PC-3 (cell line): ENCODE measurements at regions of chr11 and their contacts with region 1.

Region 1: GRCh38 chr11:96389720-96390487 is at the starts of genes CCDC82 and JRKL:
- DNase-seq: peak; percentile 99
- ATAC-seq: peak; percentile 91
- H3K4me3 ChIP-seq: peak within 1 kb of the TSS; percentile 89
- H3K27ac ChIP-seq: peak within 1 kb of the TSS; percentile 56
- H3K4me1 ChIP-seq: peaks cover 45% of the 10 kb centered on the region
- H3K27me3 ChIP-seq: no peaks in the 10 kb centered on the region
- CTCF ChIP-seq: no peak
- total RNA-seq, gene CCDC82: 13.5 and 14.5 TPM in 2 replicates
- total RNA-seq, gene JRKL: 4.7 and 5.1 TPM in 2 replicates

Region 2: GRCh38 chr11:95835768-95836488 is 554.0 kb before region 1 on chr11:
- CTCF ChIA-PET with region 1: interaction called, 8 read pairs
- POLR2A ChIA-PET with region 1: interaction called, 3 read pairs
- intact Hi-C with region 1: loop called (anchors 1 kb)
- DNase-seq: peak; percentile 94
- ATAC-seq: peak; percentile 61
- H3K4me3 ChIP-seq: no peak overlapping the region
- H3K27ac ChIP-seq: no peak overlapping the region
- H3K4me1 ChIP-seq: peaks cover 38% of the 10 kb centered on the region
- H3K27me3 ChIP-seq: no peaks in the 10 kb centered on the region
- CTCF ChIP-seq: peak; percentile 99

Region 3: GRCh38 chr11:95923728-95924413 is 466.0 kb before region 1 on chr11 and contains the start of gene MTMR2:
- CTCF ChIA-PET with region 1: no interaction called
- POLR2A ChIA-PET with region 1: interaction called, 3 read pairs
- intact Hi-C with region 1: loop called (anchors 2 kb)
- DNase-seq: peak; percentile 69
- ATAC-seq: peak; percentile 82
- H3K4me3 ChIP-seq: peak within 1 kb of the TSS; percentile 85
- H3K27ac ChIP-seq: peak within 1 kb of the TSS; percentile 81
- H3K4me1 ChIP-seq: peaks cover 26% of the 10 kb centered on the region
- H3K27me3 ChIP-seq: no peaks in the 10 kb centered on the region
- CTCF ChIP-seq: no peak
- total RNA-seq, gene MTMR2: 31.7 and 32.2 TPM in 2 replicates

Region 4: GRCh38 chr11:96037405-96037936 is 352.4 kb before region 1 on chr11:
- CTCF ChIA-PET with region 1: interaction called, 4 read pairs
- POLR2A ChIA-PET with region 1: interaction called, 6 read pairs
- intact Hi-C with region 1: loop called (anchors 2 kb)
- DNase-seq: peak; percentile 95
- ATAC-seq: peak; percentile 69
- H3K4me3 ChIP-seq: peak overlapping the region; percentile 53
- H3K27ac ChIP-seq: peak overlapping the region; percentile 91
- H3K4me1 ChIP-seq: peaks cover 49% of the 10 kb centered on the region
- H3K27me3 ChIP-seq: no peaks in the 10 kb centered on the region
- CTCF ChIP-seq: peak; percentile 53

Region 5: GRCh38 chr11:96104496-96104895 is 285.4 kb before region 1 on chr11:
- CTCF ChIA-PET with region 1: no interaction called
- POLR2A ChIA-PET with region 1: interaction called, 31 read pairs
- intact Hi-C with region 1: no loop called
- DNase-seq: no peak
- ATAC-seq: no peak
- H3K4me3 ChIP-seq: no peak overlapping the region
- H3K27ac ChIP-seq: no peak overlapping the region
- H3K4me1 ChIP-seq: peaks cover 21% of the 10 kb centered on the region
- H3K27me3 ChIP-seq: no peaks in the 10 kb centered on the region
- CTCF ChIP-seq: no peak

Region 6: DNA sequence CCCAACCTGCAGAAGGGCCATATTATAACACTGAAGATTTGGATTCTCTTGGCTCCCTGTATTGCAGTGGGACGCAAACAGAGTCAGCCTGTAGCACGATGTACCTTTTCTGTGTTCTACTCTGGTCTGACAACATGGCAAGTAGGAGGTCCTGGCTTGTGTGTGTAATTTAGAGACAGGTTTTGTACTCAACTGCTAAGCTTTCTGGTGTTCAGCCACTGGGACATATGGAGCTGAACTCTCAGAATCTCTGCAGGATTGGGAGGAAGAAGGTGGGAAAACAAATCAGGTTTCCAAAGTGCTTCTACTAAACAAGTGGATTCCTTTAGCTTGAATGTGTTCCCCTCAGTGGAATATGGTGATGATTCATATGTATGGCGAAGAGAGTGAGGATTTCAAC is 273.5 kb before region 1 on chr11:
- CTCF ChIA-PET with region 1: no interaction called
- POLR2A ChIA-PET with region 1: no interaction called
- intact Hi-C with region 1: no loop called
- DNase-seq: no peak
- ATAC-seq: no peak
- H3K4me3 ChIP-seq: no peak overlapping the region
- H3K27ac ChIP-seq: no peak overlapping the region
- H3K4me1 ChIP-seq: no peaks in the 10 kb centered on the region
- H3K27me3 ChIP-seq: no peaks in the 10 kb centered on the region
- CTCF ChIP-seq: no peak

Region 7: DNA sequence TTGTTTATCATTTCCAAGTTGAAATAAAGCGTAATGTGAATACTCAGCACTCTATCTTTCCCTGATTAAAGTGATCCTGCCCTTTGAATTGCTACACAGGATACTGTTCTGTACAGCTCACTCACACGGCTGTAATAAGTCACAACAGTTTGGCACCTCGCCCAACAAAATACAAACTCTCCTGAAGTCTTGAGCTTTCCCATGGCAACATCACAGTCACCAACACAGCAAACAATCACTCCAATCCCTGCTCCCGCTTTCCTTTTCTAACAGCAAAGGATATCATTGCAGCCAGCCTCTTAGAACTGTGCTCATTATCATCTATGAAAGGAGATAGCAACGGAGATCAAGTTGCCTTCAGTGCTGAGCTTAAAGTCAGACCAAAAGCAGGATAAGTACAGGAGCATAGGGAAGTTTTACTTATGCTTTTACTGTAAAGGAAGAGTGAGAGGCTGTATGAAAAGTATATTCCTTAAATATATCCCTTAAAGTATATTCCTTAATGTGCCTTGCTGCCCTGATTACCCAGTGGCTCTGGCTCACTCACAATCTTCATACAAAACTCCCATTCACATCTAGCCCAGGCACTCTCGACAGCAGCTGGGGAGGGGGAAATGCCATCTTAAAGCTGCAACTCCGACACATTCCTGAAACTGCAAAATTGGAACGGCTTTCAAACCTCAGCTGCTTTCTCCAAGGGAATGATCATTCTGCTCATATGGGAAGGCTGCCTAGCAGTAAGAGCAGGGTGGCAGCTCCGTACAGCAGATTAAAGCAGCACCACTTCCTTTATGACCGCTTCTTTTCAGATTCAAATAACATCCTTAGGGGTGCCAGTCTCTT is 82.8 kb before region 1 on chr11:
- CTCF ChIA-PET with region 1: no interaction called
- POLR2A ChIA-PET with region 1: interaction called, 7 read pairs
- intact Hi-C with region 1: loop called (anchors 1 kb)
- DNase-seq: peak; percentile 100
- ATAC-seq: peak; percentile 68
- H3K4me3 ChIP-seq: peak overlapping the region; percentile 60
- H3K27ac ChIP-seq: peak overlapping the region; percentile 96
- H3K4me1 ChIP-seq: peaks cover 90% of the 10 kb centered on the region
- H3K27me3 ChIP-seq: no peaks in the 10 kb centered on the region
- CTCF ChIP-seq: no peak

Region 8: DNA sequence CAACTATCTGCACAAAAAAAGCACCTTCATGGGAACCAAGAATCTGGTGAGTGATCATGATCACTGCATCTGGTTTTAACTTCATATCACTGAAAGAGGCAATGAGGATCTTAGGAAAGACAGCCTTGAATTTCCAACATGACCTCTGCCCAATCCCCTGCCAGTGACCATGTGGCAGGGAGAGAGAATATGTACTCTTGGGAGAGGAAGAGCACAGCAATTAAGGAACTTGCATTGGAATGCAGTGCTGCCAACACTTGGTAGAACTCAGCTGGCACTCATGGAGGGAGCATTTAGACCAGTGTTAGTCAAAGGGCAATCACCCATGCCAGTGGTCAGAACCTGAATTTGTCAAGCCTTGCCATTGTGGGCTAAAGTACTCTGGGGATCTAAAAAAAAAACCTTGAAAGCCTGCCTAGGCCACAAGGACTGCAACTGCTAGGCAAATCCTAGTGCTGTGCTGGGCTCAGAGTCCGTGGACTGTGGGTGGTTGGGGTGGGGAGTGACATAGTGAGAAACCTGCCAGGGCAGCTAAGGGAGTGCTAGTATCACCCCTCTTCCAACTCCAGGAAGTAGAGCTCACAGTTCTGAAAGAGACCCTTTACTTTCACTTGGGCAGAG is 23.0 kb after region 1 on chr11:
- CTCF ChIA-PET with region 1: no interaction called
- POLR2A ChIA-PET with region 1: no interaction called
- intact Hi-C with region 1: no loop called
- DNase-seq: no peak
- ATAC-seq: no peak
- H3K4me3 ChIP-seq: no peak overlapping the region
- H3K27ac ChIP-seq: no peak overlapping the region
- H3K4me1 ChIP-seq: no peaks in the 10 kb centered on the region
- H3K27me3 ChIP-seq: no peaks in the 10 kb centered on the region
- CTCF ChIP-seq: no peak

Region 9: GRCh38 chr11:96472085-96472484 is 82.2 kb after region 1 on chr11:
- CTCF ChIA-PET with region 1: no interaction called
- POLR2A ChIA-PET with region 1: no interaction called
- intact Hi-C with region 1: no loop called
- DNase-seq: no peak
- ATAC-seq: no peak
- H3K4me3 ChIP-seq: no peak overlapping the region
- H3K27ac ChIP-seq: no peak overlapping the region
- H3K4me1 ChIP-seq: peaks cover 17% of the 10 kb centered on the region
- H3K27me3 ChIP-seq: no peaks in the 10 kb centered on the region
- CTCF ChIP-seq: no peak

Region 10: GRCh38 chr11:96595011-96595410 is 205.1 kb after region 1 on chr11:
- CTCF ChIA-PET with region 1: no interaction called
- POLR2A ChIA-PET with region 1: no interaction called
- intact Hi-C with region 1: no loop called
- DNase-seq: no peak
- ATAC-seq: no peak
- H3K4me3 ChIP-seq: no peak overlapping the region
- H3K27ac ChIP-seq: no peak overlapping the region
- H3K4me1 ChIP-seq: no peaks in the 10 kb centered on the region
- H3K27me3 ChIP-seq: peaks cover 23% of the 10 kb centered on the region; the same call in 1 of the 2 replicates
- CTCF ChIP-seq: no peak